H1 (cell line): ENCODE measurements at regions of chr17 and their contacts with region 1.

Region 1: DNA sequence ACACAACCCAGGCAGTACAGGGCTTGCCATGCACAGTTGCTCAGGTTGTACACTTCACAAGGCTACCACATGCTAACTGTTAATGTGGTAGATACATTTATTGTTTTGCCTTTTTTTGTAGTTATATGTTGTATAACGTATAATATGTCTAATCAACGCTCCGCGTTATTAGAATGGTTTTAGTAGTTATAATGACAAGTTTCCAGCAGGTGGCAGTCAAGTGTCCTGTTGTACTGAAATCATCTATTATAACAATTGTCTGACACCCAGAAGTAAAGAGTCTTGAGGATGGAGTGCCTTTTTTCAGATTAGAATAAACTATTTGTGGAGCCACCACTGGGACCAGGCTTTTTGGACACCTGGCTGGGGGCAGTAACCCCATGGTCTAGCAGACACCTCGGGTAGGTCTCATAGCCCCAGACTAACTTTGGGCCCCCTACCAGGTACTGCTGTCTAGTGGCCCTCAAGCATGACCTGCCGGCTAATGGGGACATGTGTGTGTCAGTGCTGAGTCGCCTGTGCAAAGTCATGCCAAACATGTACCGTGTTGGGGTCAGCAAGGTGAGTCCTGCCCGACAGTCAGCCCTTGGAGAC is 32.8 kb downstream of the MYO15A start:
- DNase-seq: peak in 1 of 2 experiments; percentile 58
- H3K4me3 ChIP-seq: no peak overlapping the region
- H3K27ac ChIP-seq: no peak overlapping the region
- H3K4me1 ChIP-seq: peaks cover 0 to 16% (median 6%) of the 10 kb centered on the region in 4 experiments; a peak in 5 of 7 replicates
- H3K27me3 ChIP-seq: no peaks in the 10 kb centered on the region; a peak in 3 of 7 replicates
- CTCF ChIP-seq: peak in 2 of 3 experiments; percentile 17 to 56; a peak in 3 of 4 replicates
- EP300 ChIP-seq: no peak
- POLR2A ChIP-seq: no peak
- RAD21 ChIP-seq: peak; percentile 50 to 51

Region 2: DNA sequence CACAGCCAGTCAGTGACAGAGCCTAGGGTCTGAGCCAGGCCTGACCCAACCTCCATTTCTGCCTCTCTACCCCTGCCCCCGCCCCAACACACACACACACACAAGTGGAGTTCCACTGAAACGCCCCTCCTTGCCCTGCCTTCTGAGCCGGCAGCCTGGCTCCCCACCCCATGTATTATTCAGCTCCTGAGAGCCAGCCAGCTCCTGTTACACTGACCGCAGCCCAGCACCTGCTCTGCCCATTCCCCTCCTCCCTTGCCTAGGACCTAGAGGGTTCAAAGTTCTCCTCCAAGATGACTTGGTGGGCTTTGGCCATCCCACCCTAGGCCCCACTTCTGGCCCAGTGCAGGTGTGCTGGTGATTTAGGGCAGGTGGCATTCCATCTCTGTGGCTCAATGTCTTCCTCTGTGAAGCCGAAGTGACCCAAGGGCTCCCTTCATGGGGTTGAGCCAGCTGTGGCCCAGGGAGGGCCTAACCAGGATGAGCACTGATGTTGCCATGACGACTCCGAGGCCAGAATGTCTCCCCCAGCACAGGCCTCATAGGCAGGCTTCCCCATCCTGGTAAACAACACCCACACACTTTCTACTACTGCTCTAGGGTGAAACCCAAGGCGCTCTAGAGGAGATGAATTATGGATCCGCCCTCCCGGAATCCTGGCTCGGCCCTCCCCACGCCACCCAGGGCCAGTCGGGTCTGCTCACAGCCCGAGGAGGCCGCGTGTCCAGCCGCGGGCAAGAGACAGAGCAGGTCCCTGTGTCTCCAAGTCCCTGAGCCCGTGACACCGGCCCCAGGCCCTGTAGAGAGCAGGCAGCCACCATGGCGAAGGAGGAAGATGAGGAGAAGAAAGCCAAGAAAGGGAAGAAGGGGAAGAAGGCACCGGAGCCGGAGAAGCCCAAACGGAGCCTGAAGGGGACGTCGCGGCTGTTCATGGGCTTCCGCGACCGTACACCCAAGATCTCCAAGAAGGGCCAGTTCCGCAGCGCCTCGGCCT is 23.0 kb before region 1 on chr17:
- CTCF ChIA-PET with region 1: interaction called, 18 read pairs
- POLR2A ChIA-PET with region 1: interaction called, 4 read pairs
- DNase-seq: no peak
- H3K4me3 ChIP-seq: no peak overlapping the region
- H3K27ac ChIP-seq: no peak overlapping the region
- H3K4me1 ChIP-seq: no peaks in the 10 kb centered on the region; a peak in 1 of 7 replicates
- H3K27me3 ChIP-seq: no peaks in the 10 kb centered on the region
- CTCF ChIP-seq: no peak
- EP300 ChIP-seq: no peak
- POLR2A ChIP-seq: no peak
- RAD21 ChIP-seq: no peak

Region 3: DNA sequence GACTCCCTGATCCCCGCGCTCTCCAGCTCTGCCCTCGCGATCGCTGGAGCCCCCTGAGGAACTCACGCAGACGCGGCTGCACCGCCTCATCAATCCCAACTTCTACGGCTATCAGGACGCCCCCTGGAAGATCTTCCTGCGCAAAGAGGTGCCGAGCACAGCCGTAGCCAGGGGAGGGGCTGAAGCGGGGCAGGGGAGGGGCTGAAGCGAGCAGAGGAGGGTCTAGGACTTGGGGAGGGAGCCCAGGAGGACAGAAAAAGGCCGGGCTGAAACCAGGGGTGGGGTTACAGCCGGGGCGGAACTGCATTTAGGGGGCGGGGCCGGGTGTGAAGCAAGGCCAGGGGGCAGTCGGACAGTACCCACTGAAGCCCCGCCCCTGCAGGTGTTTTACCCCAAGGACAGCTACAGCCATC is 12.4 kb after region 1 on chr17:
- CTCF ChIA-PET with region 1: interaction called, 141 read pairs
- POLR2A ChIA-PET with region 1: interaction called, 13 read pairs
- DNase-seq: peak; percentile 91 to 96
- H3K4me3 ChIP-seq: peak overlapping the region; percentile 32 to 63 (median 44)
- H3K27ac ChIP-seq: no peak overlapping the region; the same call in 1 of the 2 replicates
- H3K4me1 ChIP-seq: peaks cover 2 to 19% (median 10%) of the 10 kb centered on the region in 4 experiments
- H3K27me3 ChIP-seq: no peaks in the 10 kb centered on the region; a peak in 1 of 7 replicates
- CTCF ChIP-seq: no peak
- EP300 ChIP-seq: no peak
- POLR2A ChIP-seq: peak in 1 of 2 experiments; percentile 79; a peak in 2 of 3 replicates
- RAD21 ChIP-seq: no peak

Region 4: GRCh38 chr17:18166894-18167293 is 25.6 kb after region 1 on chr17:
- CTCF ChIA-PET with region 1: interaction called, 29 read pairs
- POLR2A ChIA-PET with region 1: interaction called, 3 read pairs
- DNase-seq: no peak
- H3K4me3 ChIP-seq: no peak overlapping the region
- H3K27ac ChIP-seq: no peak overlapping the region
- H3K4me1 ChIP-seq: no peaks in the 10 kb centered on the region; a peak in 1 of 7 replicates
- H3K27me3 ChIP-seq: no peaks in the 10 kb centered on the region
- CTCF ChIP-seq: peak in 2 of 3 experiments; percentile 4 to 14; a peak in 2 of 4 replicates
- EP300 ChIP-seq: no peak
- POLR2A ChIP-seq: no peak
- RAD21 ChIP-seq: peak; percentile 34 to 54; a peak in 3 of 4 replicates

Region 5: GRCh38 chr17:18183334-18184142 is 42.2 kb after region 1 on chr17 and contains the start of gene ALKBH5:
- CTCF ChIA-PET with region 1: interaction called, 122 read pairs
- POLR2A ChIA-PET with region 1: interaction called, 10 read pairs
- DNase-seq: peak; percentile 94 to 95
- H3K4me3 ChIP-seq: peak within 1 kb of the TSS; percentile 52 to 87 (median 80)
- H3K27ac ChIP-seq: peak within 1 kb of the TSS; percentile 90
- H3K4me1 ChIP-seq: peaks cover 5 to 25% (median 8%) of the 10 kb centered on the region in 4 experiments; a peak in 6 of 7 replicates
- H3K27me3 ChIP-seq: no peaks in the 10 kb centered on the region
- CTCF ChIP-seq: peak; percentile 33 to 62 (median 49); a peak in 3 of 4 replicates
- EP300 ChIP-seq: peak in 1 of 2 experiments; percentile 32; a peak in 1 of 3 replicates
- POLR2A ChIP-seq: no peak; a peak in 1 of 3 replicates
- RAD21 ChIP-seq: no peak
- total RNA-seq, gene ALKBH5: 86.4 and 86.6 TPM in 2 replicates

Region 6: DNA sequence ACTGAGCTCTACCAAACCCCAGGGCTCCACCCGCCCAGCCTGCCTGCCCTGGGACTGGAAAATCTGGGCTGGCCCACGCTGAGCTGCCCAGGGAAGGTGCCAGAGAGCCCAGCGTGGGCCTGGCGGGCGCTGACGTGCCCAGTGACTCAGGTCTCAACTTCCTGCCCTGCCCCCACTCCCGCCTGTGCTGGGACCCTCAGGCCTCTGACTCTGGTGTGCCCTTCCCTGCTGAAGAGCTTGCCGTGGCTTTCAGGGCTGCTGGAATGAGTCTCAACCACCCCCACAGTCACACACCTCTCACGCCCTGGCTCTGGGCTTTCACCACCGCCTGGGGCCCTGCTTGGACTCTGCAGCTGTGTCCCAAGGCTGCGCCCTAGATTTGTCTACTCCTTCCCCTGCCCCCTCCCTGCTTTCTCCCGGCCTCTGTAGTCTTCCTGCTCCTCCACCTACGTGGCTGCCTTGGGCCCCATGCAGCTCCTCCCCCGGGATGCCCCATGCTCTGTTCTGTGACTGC is 94.5 kb after region 1 on chr17:
- CTCF ChIA-PET with region 1: interaction called, 23 read pairs
- POLR2A ChIA-PET with region 1: no interaction called
- DNase-seq: no peak
- H3K4me3 ChIP-seq: no peak overlapping the region
- H3K27ac ChIP-seq: no peak overlapping the region
- H3K4me1 ChIP-seq: peaks cover 0 to 4% (median 0%) of the 10 kb centered on the region in 4 experiments; a peak in 1 of 7 replicates
- H3K27me3 ChIP-seq: peaks cover 0 to 2% (median 0%) of the 10 kb centered on the region in 4 experiments; a peak in 1 of 7 replicates
- CTCF ChIP-seq: no peak
- EP300 ChIP-seq: no peak
- POLR2A ChIP-seq: no peak
- RAD21 ChIP-seq: no peak